Endothelial cell of umbilical vein (primary cell): ENCODE measurements at regions of chr10 and their contacts with region 1.

Region 1: GRCh38 chr10:119494236-119495060 is 48.1 kb downstream of the RGS10 start:
- DNase-seq: no peak
- H3K4me3 ChIP-seq: no peak overlapping the region
- H3K27ac ChIP-seq: no peak overlapping the region
- H3K4me1 ChIP-seq: no peaks in the 10 kb centered on the region
- H3K27me3 ChIP-seq: no peaks in the 10 kb centered on the region
- CTCF ChIP-seq: no peak
- POLR2A ChIP-seq: no peak

Region 2: DNA sequence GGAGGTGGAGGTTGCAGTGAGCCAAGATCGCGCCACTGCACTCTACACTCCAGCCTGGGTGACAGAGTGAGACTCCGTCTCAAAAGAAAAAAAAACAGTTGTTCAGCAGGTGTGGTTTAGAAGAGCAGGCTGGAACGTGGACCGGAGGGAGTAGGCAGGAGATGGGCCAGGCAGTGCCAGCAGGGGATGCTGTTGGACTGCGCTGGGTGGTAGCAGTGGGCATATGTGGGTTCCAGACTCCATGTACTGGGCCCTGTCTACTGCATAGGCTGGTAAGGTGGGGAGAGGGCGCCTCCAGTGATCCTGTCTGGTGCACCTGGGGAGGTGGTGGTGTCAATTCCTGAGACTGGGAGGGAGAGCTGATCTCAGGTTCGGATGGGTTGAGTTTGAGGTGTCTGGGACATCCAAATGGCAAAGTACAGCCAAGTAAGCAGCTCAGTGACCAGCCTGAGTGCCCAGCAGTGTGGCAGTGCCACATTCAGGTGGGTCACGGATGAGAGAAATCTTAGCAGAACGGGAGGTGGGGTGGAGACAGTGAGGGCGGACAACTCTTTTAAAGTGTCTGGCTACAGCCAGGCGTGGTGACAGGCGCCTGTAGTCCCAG is 354.9 kb before region 1 on chr10:
- CTCF ChIA-PET with region 1: interaction called, 3 read pairs
- POLR2A ChIA-PET with region 1: no interaction called
- dilution Hi-C with region 1: no loop called
- intact Hi-C with region 1: loop called (anchors 5 kb)
- DNase-seq: peak; percentile 37
- H3K4me3 ChIP-seq: no peak overlapping the region
- H3K27ac ChIP-seq: no peak overlapping the region
- H3K4me1 ChIP-seq: peaks cover 3% of the 10 kb centered on the region
- H3K27me3 ChIP-seq: no peaks in the 10 kb centered on the region
- CTCF ChIP-seq: peak; percentile 50 to 75
- POLR2A ChIP-seq: no peak

Region 3: GRCh38 chr10:119416855-119417254 is 77.6 kb before region 1 on chr10:
- CTCF ChIA-PET with region 1: interaction called, 3 read pairs
- POLR2A ChIA-PET with region 1: no interaction called
- dilution Hi-C with region 1: no loop called
- intact Hi-C with region 1: loop called (anchors 1 kb)
- DNase-seq: peak; percentile 52
- H3K4me3 ChIP-seq: no peak overlapping the region
- H3K27ac ChIP-seq: no peak overlapping the region
- H3K4me1 ChIP-seq: peaks cover 4% of the 10 kb centered on the region
- H3K27me3 ChIP-seq: no peaks in the 10 kb centered on the region
- CTCF ChIP-seq: peak; percentile 68 to 88
- POLR2A ChIP-seq: no peak

Region 4: DNA sequence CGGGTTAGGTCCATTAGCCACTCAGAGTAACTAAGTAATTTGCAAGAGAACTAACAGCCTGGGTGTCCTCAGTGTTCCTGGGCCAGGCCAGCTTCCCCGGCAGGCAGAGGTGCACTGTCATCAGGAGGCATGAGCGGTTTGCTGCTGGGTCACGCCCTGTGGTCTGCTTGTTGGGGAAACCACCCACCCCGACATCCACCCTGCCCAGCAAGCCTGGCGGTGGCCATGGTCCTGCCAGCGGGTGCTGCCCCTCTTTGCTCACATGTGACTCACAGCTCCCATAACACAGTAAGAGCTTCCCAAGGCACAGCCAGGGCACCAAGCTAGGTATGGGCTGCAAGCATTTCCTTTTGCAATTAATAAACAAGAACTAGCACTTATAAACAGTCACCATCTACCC is 27.8 kb before region 1 on chr10:
- CTCF ChIA-PET with region 1: interaction called, 11 read pairs
- POLR2A ChIA-PET with region 1: no interaction called
- dilution Hi-C with region 1: no loop called
- intact Hi-C with region 1: no loop called
- DNase-seq: no peak
- H3K4me3 ChIP-seq: no peak overlapping the region
- H3K27ac ChIP-seq: no peak overlapping the region
- H3K4me1 ChIP-seq: no peaks in the 10 kb centered on the region
- H3K27me3 ChIP-seq: peaks cover 8 to 22% of the 10 kb centered on the region in 2 experiments
- CTCF ChIP-seq: no peak
- POLR2A ChIP-seq: no peak

Region 5: GRCh38 chr10:119478111-119478802 is 16.2 kb before region 1 on chr10:
- CTCF ChIA-PET with region 1: interaction called, 30 read pairs
- POLR2A ChIA-PET with region 1: no interaction called
- dilution Hi-C with region 1: no loop called
- intact Hi-C with region 1: no loop called
- DNase-seq: no peak
- H3K4me3 ChIP-seq: no peak overlapping the region
- H3K27ac ChIP-seq: no peak overlapping the region
- H3K4me1 ChIP-seq: no peaks in the 10 kb centered on the region
- H3K27me3 ChIP-seq: peaks cover 27 to 30% of the 10 kb centered on the region in 2 experiments
- CTCF ChIP-seq: no peak
- POLR2A ChIP-seq: no peak